Dendritic cell treated with granulocyte-macrophage colony-stimulating factor and Interleukin-4, amounts not matched to agents 40 ng/mL and 50 ng/mL, for 4 days (primary cell): ENCODE measurements at regions of chr16 and their contacts with region 1.

Region 1: GRCh38 chr16:30844671-30845449 is 49.0 kb downstream of the BCL7C start:
- H3K4me3 Mint-ChIP-seq: no peak overlapping the region
- H3K27ac Mint-ChIP-seq: peak overlapping the region; percentile 78
- H3K4me1 Mint-ChIP-seq: peaks cover 9% of the 10 kb centered on the region
- H3K27me3 Mint-ChIP-seq: no peaks in the 10 kb centered on the region

Region 2: GRCh38 chr16:30902029-30902972 is 57.4 kb after region 1 on chr16:
- intact Hi-C with region 1: loop called (anchors 5 kb)
- H3K4me3 Mint-ChIP-seq: peak overlapping the region; percentile 96
- H3K27ac Mint-ChIP-seq: peak overlapping the region; percentile 98
- H3K4me1 Mint-ChIP-seq: peaks cover 38% of the 10 kb centered on the region
- H3K27me3 Mint-ChIP-seq: no peaks in the 10 kb centered on the region

Region 3: GRCh38 chr16:31542763-31543162 is 697.9 kb after region 1 on chr16:
- intact Hi-C with region 1: no loop called
- H3K4me3 Mint-ChIP-seq: no peak overlapping the region
- H3K27ac Mint-ChIP-seq: no peak overlapping the region
- H3K4me1 Mint-ChIP-seq: peaks cover 1% of the 10 kb centered on the region
- H3K27me3 Mint-ChIP-seq: peaks cover 28% of the 10 kb centered on the region